ENCODE measurements at regions of chr1 and their contacts with region 1.

Region 1: GRCh38 chr1:107430540-107431228 is 289.8 kb downstream of the NTNG1 start:
- DNase-seq: peak; percentile 14 to 26
- H3K4me3 ChIP-seq: no peak overlapping the region
- H3K27ac ChIP-seq: no peak overlapping the region
- H3K4me1 ChIP-seq: no peaks in the 10 kb centered on the region
- H3K27me3 ChIP-seq: no peaks in the 10 kb centered on the region
- CTCF ChIP-seq: peak; percentile 35 to 72 (median 50)
- POLR2A ChIP-seq: no peak

Region 2: GRCh38 chr1:107515702-107516101 is 85.0 kb after region 1 on chr1:
- intact Hi-C with region 1: no loop called
- DNase-seq: no peak
- H3K4me3 ChIP-seq: no peak overlapping the region
- H3K27ac ChIP-seq: no peak overlapping the region
- H3K4me1 ChIP-seq: no peaks in the 10 kb centered on the region
- H3K27me3 ChIP-seq: no peaks in the 10 kb centered on the region
- CTCF ChIP-seq: no peak
- POLR2A ChIP-seq: no peak

Region 3: GRCh38 chr1:107547363-107548155 is 116.9 kb after region 1 on chr1:
- intact Hi-C with region 1: no loop called
- DNase-seq: no peak
- H3K4me3 ChIP-seq: no peak overlapping the region
- H3K27ac ChIP-seq: no peak overlapping the region
- H3K4me1 ChIP-seq: no peaks in the 10 kb centered on the region
- H3K27me3 ChIP-seq: no peaks in the 10 kb centered on the region
- CTCF ChIP-seq: no peak
- POLR2A ChIP-seq: no peak

Region 4: GRCh38 chr1:107572653-107573211 is 142.0 kb after region 1 on chr1:
- intact Hi-C with region 1: no loop called
- DNase-seq: no peak
- H3K4me3 ChIP-seq: no peak overlapping the region
- H3K27ac ChIP-seq: no peak overlapping the region
- H3K4me1 ChIP-seq: no peaks in the 10 kb centered on the region
- H3K27me3 ChIP-seq: no peaks in the 10 kb centered on the region
- CTCF ChIP-seq: no peak
- POLR2A ChIP-seq: no peak

Region 5: GRCh38 chr1:107727882-107728281 is 297.2 kb after region 1 on chr1:
- intact Hi-C with region 1: no loop called
- DNase-seq: no peak
- H3K4me3 ChIP-seq: no peak overlapping the region
- H3K27ac ChIP-seq: no peak overlapping the region
- H3K4me1 ChIP-seq: no peaks in the 10 kb centered on the region
- H3K27me3 ChIP-seq: no peaks in the 10 kb centered on the region
- CTCF ChIP-seq: no peak
- POLR2A ChIP-seq: no peak

Region 6: GRCh38 chr1:107750358-107750959 is 319.8 kb after region 1 on chr1:
- intact Hi-C with region 1: loop called (anchors 10 kb)
- DNase-seq: peak; percentile 45 to 56
- H3K4me3 ChIP-seq: no peak overlapping the region
- H3K27ac ChIP-seq: no peak overlapping the region
- H3K4me1 ChIP-seq: no peaks in the 10 kb centered on the region
- H3K27me3 ChIP-seq: no peaks in the 10 kb centered on the region
- CTCF ChIP-seq: peak in 4 of 6 experiments; percentile 30 to 62 (median 56)
- POLR2A ChIP-seq: no peak